Gastrocnemius medialis (tissue), 4 donors: ENCODE measurements at regions of chr5 and their contacts with region 1.

Region 1: DNA sequence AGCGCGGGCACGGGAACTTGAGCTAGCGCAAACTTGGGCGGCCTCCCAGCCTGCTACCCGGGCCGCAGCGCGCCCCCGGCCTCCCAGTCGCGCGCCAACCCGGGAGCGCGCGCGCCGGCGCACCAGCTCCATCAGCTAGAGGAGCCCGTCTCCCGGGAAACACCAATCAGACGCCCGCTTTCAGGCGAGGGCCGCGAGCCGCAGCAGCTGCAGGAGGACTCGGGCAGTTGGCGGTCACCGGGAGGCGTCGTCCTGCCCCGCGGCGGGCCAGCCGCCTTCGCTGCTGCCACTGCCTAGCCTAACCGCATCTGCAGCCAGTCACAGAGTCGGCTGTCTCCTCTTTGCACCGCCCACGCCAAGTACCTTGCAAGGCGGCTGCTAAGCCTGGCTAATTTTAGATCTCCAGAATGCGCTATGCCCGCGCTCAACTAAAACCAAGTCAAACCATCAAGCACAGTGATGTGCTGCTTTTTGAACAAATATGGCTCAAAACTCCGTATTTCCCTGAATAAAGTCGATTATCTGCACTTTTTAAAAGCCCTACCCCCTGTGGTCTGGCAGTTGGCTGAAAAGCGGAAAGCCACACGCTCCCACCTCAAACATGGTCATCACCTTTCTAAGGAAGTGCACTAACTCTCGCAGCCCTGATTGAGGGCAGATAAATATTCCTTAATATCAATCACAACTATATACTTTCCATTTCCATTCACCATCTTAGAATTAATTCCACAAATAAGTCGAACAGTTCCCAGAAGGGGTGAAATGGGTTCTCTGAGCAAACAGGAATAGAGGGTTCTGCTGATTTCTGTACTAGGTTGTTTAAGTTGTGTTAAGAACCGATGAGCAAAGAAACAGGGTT is 221.8 kb downstream of the MEF2C start:
- DNase-seq: peak in 1 of 2 donors; percentile 23
- ATAC-seq: peak in 1 of 2 donors; percentile 49
- H3K4me3 ChIP-seq: peak overlapping the region; percentile 29 to 43 (median 36)
- H3K27ac ChIP-seq: no peak overlapping the region
- H3K4me1 ChIP-seq: peaks cover 7 to 8% of the 10 kb centered on the region in 2 donors
- H3K27me3 ChIP-seq: peaks cover 96 to 100% (median 98%) of the 10 kb centered on the region in 3 donors
- CTCF ChIP-seq: no peak
- POLR2A ChIP-seq: no peak

Region 2: DNA sequence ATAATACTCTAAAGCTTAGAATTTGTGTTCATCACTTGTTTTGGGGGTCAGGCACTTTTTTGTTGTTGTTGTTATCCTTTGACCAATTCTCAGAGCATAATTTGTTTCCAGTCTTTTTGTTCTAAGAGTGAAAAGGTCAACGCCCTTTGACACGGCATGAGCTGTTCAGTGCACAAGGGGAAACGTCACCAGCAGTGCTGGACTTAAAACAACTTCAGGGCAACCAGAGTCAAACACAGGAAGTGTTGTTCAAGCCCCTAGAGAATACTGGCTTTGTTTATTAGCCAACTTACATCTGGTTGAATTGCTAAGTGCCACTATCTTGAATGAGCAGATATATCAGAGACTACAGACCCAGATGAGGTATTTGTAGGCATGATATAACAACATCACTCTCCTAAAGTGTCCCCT is 761.5 kb before region 1 on chr5:
- in situ Hi-C with region 1: no loop called
- intact Hi-C with region 1: loop called (anchors 10 kb)
- DNase-seq: peak; percentile 54 to 67
- ATAC-seq: peak; percentile 86 to 92
- H3K4me3 ChIP-seq: no peak overlapping the region
- H3K27ac ChIP-seq: peak overlapping the region; percentile 32 to 74 (median 66)
- H3K4me1 ChIP-seq: peaks cover 0 to 3% of the 10 kb centered on the region in 2 donors
- H3K27me3 ChIP-seq: no peaks in the 10 kb centered on the region
- CTCF ChIP-seq: no peak
- POLR2A ChIP-seq: no peak

Region 3: GRCh38 chr5:88555674-88556073 is 105.5 kb before region 1 on chr5:
- in situ Hi-C with region 1: no loop called
- intact Hi-C with region 1: no loop called
- DNase-seq: no peak
- ATAC-seq: no peak
- H3K4me3 ChIP-seq: no peak overlapping the region
- H3K27ac ChIP-seq: no peak overlapping the region
- H3K4me1 ChIP-seq: no peaks in the 10 kb centered on the region
- H3K27me3 ChIP-seq: no peaks in the 10 kb centered on the region
- CTCF ChIP-seq: no peak
- POLR2A ChIP-seq: no peak

Region 4: GRCh38 chr5:88854769-88855168 is 193.6 kb after region 1 on chr5:
- in situ Hi-C with region 1: no loop called
- intact Hi-C with region 1: no loop called
- DNase-seq: no peak
- ATAC-seq: no peak
- H3K4me3 ChIP-seq: no peak overlapping the region
- H3K27ac ChIP-seq: peak overlapping the region; percentile 1 to 64 (median 24)
- H3K4me1 ChIP-seq: peaks cover 0 to 15% of the 10 kb centered on the region in 2 donors
- H3K27me3 ChIP-seq: no peaks in the 10 kb centered on the region
- CTCF ChIP-seq: no peak
- POLR2A ChIP-seq: no peak

Region 5: DNA sequence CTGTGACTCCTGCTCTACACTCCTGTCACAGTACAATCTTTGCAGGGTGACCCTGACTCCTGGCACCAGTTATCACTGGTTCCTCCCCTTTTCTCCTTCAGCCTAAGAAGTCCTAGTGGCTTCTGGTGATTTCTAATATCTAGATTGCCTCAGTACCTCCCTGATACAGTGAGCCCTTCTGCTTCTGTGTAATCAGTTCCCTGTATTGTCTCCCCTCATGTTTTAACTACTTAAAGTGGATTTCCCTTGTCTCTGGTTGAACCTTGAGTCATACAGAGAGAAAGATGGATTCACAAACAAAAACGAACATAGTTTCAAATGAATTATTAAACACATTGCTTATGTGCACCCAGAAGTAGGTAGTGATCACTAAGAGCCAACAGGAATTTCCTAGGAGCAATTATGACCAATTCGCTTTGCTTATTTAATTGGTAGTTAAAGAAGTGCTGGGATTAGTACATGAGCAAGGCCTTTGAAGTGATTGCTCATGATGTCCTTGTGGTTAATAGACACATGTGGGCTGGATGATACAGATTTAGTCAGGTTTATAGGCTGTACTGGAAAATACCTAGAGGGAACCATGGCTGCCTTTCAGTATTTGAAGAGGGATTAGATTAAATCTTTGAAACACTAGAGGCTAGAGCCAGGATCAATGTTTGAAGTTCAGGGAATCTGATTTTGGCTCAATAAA is 367.6 kb after region 1 on chr5:
- in situ Hi-C with region 1: no loop called
- intact Hi-C with region 1: no loop called
- DNase-seq: no peak
- ATAC-seq: no peak
- H3K4me3 ChIP-seq: no peak overlapping the region
- H3K27ac ChIP-seq: no peak overlapping the region
- H3K4me1 ChIP-seq: no peaks in the 10 kb centered on the region
- H3K27me3 ChIP-seq: no peaks in the 10 kb centered on the region
- CTCF ChIP-seq: no peak
- POLR2A ChIP-seq: no peak